Motor neuron (in vitro differentiated cells): ENCODE measurements at regions of chrX and their contacts with region 1.

Region 1: DNA sequence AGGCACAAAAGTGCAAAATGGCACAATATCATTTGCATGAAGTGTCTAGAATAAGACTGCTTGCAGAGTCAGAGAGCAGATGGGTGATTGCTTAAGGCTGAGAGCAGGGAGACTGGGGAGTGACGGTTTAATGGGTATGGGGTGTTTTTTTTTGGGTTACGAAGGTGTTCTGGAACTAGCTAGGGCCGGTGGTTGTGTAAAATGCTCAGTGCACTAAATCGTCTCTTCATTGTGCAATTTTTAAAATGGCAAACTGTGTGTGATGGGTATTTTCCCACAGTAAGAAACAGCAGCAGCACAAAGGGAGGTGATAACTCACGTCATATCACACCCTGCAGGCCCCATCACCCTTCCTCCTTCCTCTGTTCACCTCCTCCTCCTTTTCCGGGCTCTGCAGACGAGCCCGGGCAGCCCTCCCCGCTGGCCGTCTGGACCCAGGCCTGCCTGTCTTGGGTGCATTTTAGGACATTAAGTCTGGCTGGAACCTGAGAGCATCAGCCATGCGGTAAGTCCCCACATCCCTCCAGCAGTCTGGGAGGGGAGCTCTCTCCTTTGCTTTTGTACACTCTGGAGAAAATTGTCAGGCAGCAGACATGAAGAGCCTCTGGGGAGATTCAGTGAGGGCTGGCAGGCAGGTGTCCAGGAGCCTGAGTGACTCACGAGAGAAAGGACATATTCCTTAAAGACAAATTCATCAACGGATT is 42.7 kb downstream of the ASMT start:
- ATAC-seq: peak; percentile 35 to 84 (median 72)
- H3K4me3 ChIP-seq: peak overlapping the region; percentile 12 to 25 (median 22)
- H3K27ac ChIP-seq: peak overlapping the region; percentile 87 to 94
- H3K4me1 ChIP-seq: peaks cover 9 to 26% of the 10 kb centered on the region in 2 donors

Region 2: DNA sequence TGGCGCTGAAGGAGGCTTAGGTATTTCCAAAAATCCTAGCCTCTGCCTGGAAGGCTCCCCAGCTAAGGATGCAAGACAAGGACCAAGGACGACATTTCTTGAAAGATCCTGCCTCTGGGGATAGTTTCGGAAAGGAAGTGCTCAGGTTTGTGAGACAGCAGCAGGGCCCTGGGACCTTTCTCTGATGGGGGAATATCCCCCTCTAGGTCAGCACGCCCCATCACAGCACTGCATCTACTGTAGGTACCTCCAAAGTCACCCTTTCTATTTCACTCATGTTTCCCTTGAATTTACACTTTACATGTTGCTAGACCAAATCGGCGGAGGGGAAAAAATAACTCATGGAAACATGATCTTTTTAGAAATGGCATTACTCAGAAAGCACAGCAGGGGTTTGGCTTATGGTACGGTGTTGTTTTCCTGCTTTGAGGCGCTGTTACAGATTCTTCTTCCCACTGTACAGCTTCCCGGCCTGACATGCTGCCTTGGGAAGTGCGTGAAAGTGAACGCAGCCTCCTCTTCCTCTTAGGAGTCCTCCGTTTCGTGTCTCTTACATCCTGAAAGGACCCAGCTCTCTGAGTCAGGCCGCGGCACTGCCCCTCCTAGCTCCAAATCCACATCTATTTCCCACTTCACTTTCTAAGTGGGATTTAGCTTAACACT is 920.5 kb after region 1 on chrX:
- in situ Hi-C with region 1: loop called in 3 of 9 experiments (anchors 25 kb)
- ATAC-seq: no peak
- H3K4me3 ChIP-seq: no peak overlapping the region
- H3K27ac ChIP-seq: no peak overlapping the region
- H3K4me1 ChIP-seq: peaks cover 0 to 13% of the 10 kb centered on the region in 2 donors

Region 3: DNA sequence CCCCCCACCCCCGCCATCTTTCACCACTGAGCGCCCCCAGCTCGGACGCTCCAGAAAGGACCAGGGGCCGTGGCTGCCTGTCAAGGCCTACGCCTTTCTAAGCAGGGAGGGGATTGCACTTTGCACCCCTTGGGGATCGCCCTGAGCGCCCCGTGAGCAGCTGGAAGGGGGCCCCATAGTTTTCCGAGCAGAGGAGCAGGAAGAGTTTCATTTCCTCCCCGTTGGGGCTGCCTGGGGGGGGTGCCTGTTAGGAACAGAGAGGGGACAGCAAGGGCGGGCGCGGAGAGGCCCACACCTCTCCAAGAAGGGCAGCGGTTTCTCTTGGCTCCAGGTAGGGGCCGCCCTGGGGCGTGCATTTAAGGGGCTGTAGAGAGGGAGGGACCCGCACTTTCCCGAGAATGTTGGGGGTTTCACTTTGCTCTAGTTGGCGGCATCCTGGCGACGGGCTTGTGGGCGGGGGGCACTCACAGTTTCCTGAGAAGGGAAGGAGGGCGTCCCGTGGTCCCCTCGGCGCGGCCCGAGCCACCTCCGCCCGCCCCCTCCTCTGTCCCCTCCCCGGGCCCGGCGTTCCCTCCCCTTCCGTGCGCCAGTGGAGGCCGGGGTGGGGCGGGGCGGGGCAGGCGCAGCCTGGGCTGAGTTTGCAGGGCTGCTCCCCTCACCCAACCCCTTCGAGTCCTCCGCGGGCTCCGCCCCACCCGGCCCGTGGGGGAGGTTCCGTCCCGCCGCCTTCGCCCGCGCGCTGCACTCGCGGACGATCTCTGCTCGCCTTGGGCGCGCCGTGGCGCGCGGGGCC is 951.3 kb after region 1 on chrX:
- in situ Hi-C with region 1: loop called in 2 of 9 experiments (anchors 25 kb)
- ATAC-seq: peak; percentile 90 to 95 (median 94)
- H3K4me3 ChIP-seq: peak overlapping the region; percentile 46 to 57 (median 54)
- H3K27ac ChIP-seq: peak overlapping the region in 1 of 2 donors; percentile 18
- H3K4me1 ChIP-seq: no peaks in the 10 kb centered on the region